ENCODE measurements at regions of chrX and their contacts with region 1.

Region 1: GRCh38 chrX:120090208-120090607 is 12.7 kb upstream of the RHOXF2B start:
- DNase-seq: no peak
- H3K4me3 ChIP-seq: no peak overlapping the region
- H3K27ac ChIP-seq: no peak overlapping the region
- H3K4me1 ChIP-seq: no peaks in the 10 kb centered on the region
- H3K27me3 ChIP-seq: no peaks in the 10 kb centered on the region
- CTCF ChIP-seq: no peak
- EP300 ChIP-seq: no peak
- POLR2A ChIP-seq: no peak

Region 2: GRCh38 chrX:119852382-119853353 is 237.5 kb before region 1 on chrX and contains the start of gene UPF3B:
- intact Hi-C with region 1: no loop called
- DNase-seq: peak; percentile 93 to 97 (median 96)
- H3K4me3 ChIP-seq: peak within 1 kb of the TSS; percentile 69
- H3K27ac ChIP-seq: peak within 1 kb of the TSS; percentile 57 to 82
- H3K4me1 ChIP-seq: no peaks in the 10 kb centered on the region
- H3K27me3 ChIP-seq: no peaks in the 10 kb centered on the region
- CTCF ChIP-seq: no peak
- EP300 ChIP-seq: no peak
- POLR2A ChIP-seq: peak; percentile 56
- total RNA-seq, gene UPF3B: 3.5 to 8.1 (median 7.6) TPM

Region 3: DNA sequence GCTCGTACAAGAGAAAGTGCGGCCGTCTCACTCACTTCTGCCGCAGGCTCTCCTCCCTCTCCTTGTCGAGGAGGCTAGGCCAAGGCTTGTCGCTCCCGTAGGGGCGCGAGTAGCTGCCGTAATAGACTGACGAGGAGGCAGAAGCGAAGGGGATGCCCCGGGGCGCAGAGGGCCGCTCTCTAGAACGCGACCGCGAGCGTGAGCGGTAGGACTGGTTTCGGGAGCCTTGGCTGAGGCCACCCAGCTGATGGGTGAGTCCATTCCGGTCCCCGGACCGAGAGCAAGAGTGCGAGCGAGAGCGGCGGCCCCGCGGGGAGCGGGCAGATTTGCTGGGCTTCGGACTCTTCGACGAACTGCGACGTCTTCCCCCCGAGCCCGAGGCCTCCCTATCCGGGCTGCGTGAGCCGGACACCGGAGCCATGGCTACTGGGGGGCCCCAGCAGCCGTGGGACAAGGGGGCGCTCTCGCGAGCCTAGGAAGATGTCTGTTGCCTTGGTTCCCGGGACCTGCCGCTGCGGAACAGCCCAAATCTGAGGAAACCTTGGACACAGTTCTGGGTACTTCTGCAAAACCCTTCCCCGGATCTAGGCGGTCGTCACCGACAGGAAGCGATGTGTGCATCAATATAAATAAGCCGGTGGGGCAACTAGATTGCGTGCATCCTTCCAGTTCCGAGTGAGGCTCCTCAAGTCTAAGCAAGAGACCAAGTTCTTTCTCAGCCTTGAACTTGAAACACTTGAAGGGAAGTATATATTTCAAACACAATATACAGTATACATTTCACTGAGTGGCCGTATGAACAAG is 146.8 kb before region 1 on chrX and contains the start of gene NKAP:
- intact Hi-C with region 1: no loop called
- DNase-seq: peak; percentile 75 to 86 (median 83)
- H3K4me3 ChIP-seq: peak within 1 kb of the TSS; percentile 67
- H3K27ac ChIP-seq: peak within 1 kb of the TSS; percentile 79 to 83
- H3K4me1 ChIP-seq: peaks cover 5% of the 10 kb centered on the region
- H3K27me3 ChIP-seq: no peaks in the 10 kb centered on the region
- CTCF ChIP-seq: peak in 1 of 3 donors; percentile 8
- EP300 ChIP-seq: no peak
- POLR2A ChIP-seq: peak; percentile 35
- total RNA-seq, gene NKAP: 7.6 to 11.6 (median 10.8) TPM

Region 4: GRCh38 chrX:120000490-120001246 is 89.5 kb before region 1 on chrX:
- intact Hi-C with region 1: no loop called
- DNase-seq: no peak
- H3K4me3 ChIP-seq: no peak overlapping the region
- H3K27ac ChIP-seq: no peak overlapping the region
- H3K4me1 ChIP-seq: peaks cover 2% of the 10 kb centered on the region
- H3K27me3 ChIP-seq: no peaks in the 10 kb centered on the region
- CTCF ChIP-seq: no peak
- EP300 ChIP-seq: no peak
- POLR2A ChIP-seq: no peak

Region 5: GRCh38 chrX:120213436-120214265 is 123.4 kb after region 1 on chrX:
- intact Hi-C with region 1: loop called in 1 of 4 experiments (anchors 10 kb)
- DNase-seq: peak; percentile 40 to 70 (median 51)
- H3K4me3 ChIP-seq: no peak overlapping the region
- H3K27ac ChIP-seq: no peak overlapping the region
- H3K4me1 ChIP-seq: peaks cover 1% of the 10 kb centered on the region
- H3K27me3 ChIP-seq: no peaks in the 10 kb centered on the region
- CTCF ChIP-seq: peak; percentile 47 to 55 (median 49)
- EP300 ChIP-seq: no peak
- POLR2A ChIP-seq: no peak

Region 6: DNA sequence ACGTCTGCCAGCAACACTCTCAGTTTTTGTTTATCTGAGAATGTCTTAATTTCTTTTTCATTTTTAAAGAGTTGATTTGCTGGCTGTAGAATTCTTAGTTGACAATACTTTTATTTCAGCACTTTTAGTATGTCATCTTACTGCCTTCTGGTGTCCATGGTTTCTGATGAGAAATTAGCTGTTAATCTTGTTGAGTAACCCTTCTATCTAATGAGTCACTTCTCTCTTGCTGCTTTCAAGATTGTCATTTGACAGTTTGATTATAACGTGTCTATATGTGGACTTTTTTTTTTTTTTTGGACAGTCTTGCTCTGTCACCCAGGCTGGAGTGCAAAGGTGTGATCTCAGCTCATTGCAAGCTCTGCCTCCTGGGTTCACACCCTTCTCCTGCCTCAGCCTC is 245.1 kb after region 1 on chrX:
- intact Hi-C with region 1: no loop called
- DNase-seq: no peak
- H3K4me3 ChIP-seq: no peak overlapping the region
- H3K27ac ChIP-seq: no peak overlapping the region
- H3K4me1 ChIP-seq: no peaks in the 10 kb centered on the region
- H3K27me3 ChIP-seq: no peaks in the 10 kb centered on the region
- CTCF ChIP-seq: no peak
- EP300 ChIP-seq: no peak
- POLR2A ChIP-seq: no peak